Activated B cell treated with CpG ODN at 0.5 μM for 24 hours (primary cell): ENCODE measurements at regions of chr14 and their contacts with region 1.

Region 1: DNA sequence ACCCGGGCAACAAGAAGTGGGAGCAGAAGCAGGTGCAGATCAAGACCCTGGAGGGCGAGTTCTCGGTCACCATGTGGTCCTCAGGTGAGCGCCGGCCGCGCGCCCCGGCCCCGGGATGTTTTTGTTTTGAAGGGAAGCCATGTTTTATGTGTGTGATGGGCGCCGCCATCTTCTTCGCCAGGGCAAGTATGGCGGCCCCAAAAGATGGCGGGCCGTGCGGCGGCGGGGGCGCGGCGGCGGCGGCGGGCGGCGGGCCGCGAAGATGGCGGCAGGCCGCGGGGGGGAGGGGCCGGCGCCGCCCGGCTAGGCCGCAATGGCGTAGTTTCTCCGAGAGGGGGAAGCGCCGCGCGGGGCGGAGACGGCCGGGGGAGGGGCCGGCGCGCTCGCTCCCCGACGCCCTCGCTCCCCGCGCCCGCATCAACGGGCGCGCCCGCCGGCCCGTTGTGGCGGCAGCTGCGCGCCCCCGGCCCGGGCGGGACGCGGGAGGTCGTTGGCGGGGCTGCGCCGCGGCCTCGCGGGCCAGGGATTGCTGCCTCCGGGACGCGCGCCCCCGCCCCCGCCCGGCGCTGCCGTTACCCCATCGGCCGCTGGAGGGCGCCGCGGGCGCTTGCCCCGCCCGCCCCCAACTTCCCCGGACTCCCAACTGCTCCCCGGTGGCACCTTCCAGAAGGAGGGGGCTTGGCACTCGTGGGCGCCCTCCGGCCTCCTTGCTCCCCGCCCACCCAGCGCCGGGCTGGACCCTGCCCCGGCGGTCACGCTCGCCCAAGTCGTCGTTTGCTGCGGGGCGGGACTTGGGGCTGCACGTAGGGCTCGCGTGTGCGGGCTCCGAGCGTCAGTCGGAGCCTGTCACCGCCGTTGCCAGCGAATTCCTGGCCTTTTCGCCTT is 1.1 kb downstream of the YY1 start:
- DNase-seq: peak; percentile 86
- ATAC-seq: peak; percentile 48
- H3K4me3 Mint-ChIP-seq: peak overlapping the region; percentile 87
- H3K27ac Mint-ChIP-seq: peak overlapping the region; percentile 90
- H3K4me1 Mint-ChIP-seq: peaks cover 61% of the 10 kb centered on the region
- H3K27me3 Mint-ChIP-seq: no peaks in the 10 kb centered on the region
- CTCF ChIP-seq: no peak

Region 2: GRCh38 chr14:99604283-99604765 is 635.8 kb before region 1 on chr14:
- CTCF ChIA-PET with region 1: no interaction called
- POLR2A ChIA-PET with region 1: no interaction called
- intact Hi-C with region 1: loop called (anchors 10 kb)
- DNase-seq: peak; percentile 96
- ATAC-seq: peak; percentile 94
- H3K4me3 Mint-ChIP-seq: peak overlapping the region; percentile 88
- H3K27ac Mint-ChIP-seq: peak overlapping the region; percentile 71
- H3K4me1 Mint-ChIP-seq: peaks cover 9% of the 10 kb centered on the region
- H3K27me3 Mint-ChIP-seq: no peaks in the 10 kb centered on the region
- CTCF ChIP-seq: no peak

Region 3: GRCh38 chr14:100155042-100155846 is 84.8 kb before region 1 on chr14:
- CTCF ChIA-PET with region 1: interaction called, 3 read pairs
- POLR2A ChIA-PET with region 1: no interaction called
- intact Hi-C with region 1: loop called (anchors 2 kb)
- DNase-seq: no peak
- ATAC-seq: no peak
- H3K4me3 Mint-ChIP-seq: no peak overlapping the region
- H3K27ac Mint-ChIP-seq: no peak overlapping the region
- H3K4me1 Mint-ChIP-seq: peaks cover 31% of the 10 kb centered on the region
- H3K27me3 Mint-ChIP-seq: no peaks in the 10 kb centered on the region
- CTCF ChIP-seq: no peak

Region 4: GRCh38 chr14:100221533-100222223 is 18.4 kb before region 1 on chr14:
- CTCF ChIA-PET with region 1: interaction called, 6 read pairs
- POLR2A ChIA-PET with region 1: interaction called, 18 read pairs
- intact Hi-C with region 1: loop called (anchors 1 kb)
- DNase-seq: peak; percentile 37
- ATAC-seq: peak; percentile 97
- H3K4me3 Mint-ChIP-seq: no peak overlapping the region
- H3K27ac Mint-ChIP-seq: no peak overlapping the region
- H3K4me1 Mint-ChIP-seq: peaks cover 19% of the 10 kb centered on the region
- H3K27me3 Mint-ChIP-seq: no peaks in the 10 kb centered on the region
- CTCF ChIP-seq: no peak

Region 5: DNA sequence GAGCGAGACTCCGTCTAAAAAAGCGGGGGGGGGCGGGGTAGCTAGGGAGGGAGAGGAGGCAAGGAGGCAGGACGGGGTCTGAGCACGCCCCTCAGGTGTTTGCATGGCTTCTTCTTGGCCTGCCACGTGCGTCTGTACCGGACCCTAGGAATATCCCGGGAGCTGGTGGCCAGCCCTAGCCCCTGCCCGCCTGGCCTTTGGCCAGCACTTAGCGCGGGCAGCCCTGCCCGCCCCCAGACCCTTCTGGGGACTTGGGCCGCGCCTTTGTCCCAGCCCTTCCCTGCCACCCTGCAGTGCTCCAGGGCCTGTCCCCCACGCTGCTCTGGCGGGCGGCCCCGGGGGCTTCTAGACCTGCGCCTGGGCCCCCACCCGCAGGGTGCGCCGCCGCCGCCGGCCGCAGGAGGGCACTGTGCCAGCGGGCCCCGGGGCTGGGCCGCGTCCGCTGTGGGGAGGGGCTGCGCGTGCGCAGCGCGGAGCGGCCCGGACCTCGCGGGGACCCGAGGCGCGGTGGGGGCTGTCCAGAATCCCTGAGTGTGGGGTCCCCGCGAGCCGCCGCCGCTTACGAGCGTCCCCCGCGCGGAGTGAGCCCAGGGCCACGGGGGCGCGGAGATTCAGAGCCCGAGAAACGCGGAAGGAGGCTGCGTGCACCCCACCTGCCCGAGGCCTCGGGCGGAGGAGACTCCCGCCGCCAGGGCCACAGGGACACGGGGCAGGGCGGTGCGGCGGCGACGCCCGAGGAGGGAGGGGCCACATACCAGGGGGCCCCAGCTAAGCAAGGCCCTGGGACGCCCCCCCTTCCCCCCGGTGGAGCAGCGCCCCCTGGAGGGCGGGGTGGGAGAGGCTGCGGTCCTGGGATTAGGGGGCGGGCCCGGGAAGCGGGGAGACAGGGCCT is 45.2 kb after region 1 on chr14:
- CTCF ChIA-PET with region 1: interaction called, 4 read pairs
- POLR2A ChIA-PET with region 1: interaction called, 4 read pairs
- intact Hi-C with region 1: loop called (anchors 1 kb)
- DNase-seq: peak; percentile 92
- ATAC-seq: peak; percentile 93
- H3K4me3 Mint-ChIP-seq: peak overlapping the region; percentile 82
- H3K27ac Mint-ChIP-seq: peak overlapping the region; percentile 85
- H3K4me1 Mint-ChIP-seq: peaks cover 10% of the 10 kb centered on the region
- H3K27me3 Mint-ChIP-seq: no peaks in the 10 kb centered on the region
- CTCF ChIP-seq: peak; percentile 71

Region 6: GRCh38 chr14:100317912-100318808 is 78.1 kb after region 1 on chr14:
- CTCF ChIA-PET with region 1: no interaction called
- POLR2A ChIA-PET with region 1: interaction called, 3 read pairs
- intact Hi-C with region 1: loop called (anchors 1 kb)
- DNase-seq: peak; percentile 76
- ATAC-seq: peak; percentile 98
- H3K4me3 Mint-ChIP-seq: peak overlapping the region; percentile 80
- H3K27ac Mint-ChIP-seq: peak overlapping the region; percentile 82
- H3K4me1 Mint-ChIP-seq: peaks cover 3% of the 10 kb centered on the region
- H3K27me3 Mint-ChIP-seq: no peaks in the 10 kb centered on the region
- CTCF ChIP-seq: peak; percentile 78